GM10248 (cell line): ENCODE measurements at regions of chr17 and their contacts with region 1.

Region 1: DNA sequence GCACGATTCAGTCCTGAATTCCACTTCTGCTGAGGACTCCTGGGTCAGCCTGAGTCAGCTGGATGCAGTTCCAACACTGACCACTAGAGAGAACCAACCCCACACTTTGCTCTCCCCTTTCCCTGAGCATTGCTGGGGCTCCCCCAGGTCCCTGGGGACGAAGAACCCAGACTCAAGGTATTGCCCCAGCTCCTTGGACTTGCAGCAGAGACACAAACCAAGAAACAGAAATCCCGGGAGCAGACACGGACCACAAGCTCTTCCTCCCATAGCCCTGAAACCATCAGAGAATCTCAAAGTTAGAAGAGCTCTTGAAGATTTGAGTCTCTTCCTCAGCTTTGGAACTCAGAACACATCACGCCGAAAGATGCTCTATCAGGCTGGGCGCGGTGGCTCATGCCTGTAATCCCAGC is 678 bp upstream of the GH1 start:
- DNase-seq: peak; percentile 85
- CTCF ChIP-seq: peak; percentile 89

Region 2: DNA sequence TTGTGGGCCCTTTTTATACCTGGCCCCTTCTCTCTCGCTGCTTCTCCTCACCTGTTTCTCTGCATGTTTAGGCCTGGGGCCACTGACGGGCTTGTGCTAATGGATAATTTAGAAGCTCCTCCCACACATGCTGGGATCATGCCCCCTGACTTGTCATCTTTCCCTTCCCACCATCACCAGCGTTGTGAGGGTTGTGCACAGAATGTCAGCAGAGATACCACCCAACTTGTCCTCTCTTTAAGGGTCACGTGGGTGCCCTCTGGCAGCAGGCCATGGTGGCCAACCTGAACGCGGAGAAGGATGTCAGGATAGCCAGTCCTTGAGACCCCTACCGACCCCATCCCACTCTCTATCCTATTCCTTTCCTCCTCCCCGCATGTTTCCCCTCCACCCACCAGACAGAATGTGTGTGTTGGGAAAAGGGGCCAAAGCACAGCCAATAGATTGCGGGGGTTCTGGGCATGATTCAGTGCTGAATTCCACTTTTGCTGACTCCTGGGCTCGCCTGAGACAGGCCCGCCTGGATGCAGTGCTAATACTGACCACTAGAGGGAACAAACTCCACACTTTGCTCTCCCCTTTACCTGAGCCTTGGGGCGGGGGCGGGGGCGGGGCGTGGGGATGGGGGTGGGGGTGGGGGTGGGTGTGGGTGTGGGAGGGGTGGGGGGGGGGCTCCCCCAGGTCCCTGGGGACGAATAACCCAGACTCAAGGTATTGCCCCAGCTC is 37.3 kb before region 1 on chr17 and contains the start of gene GH2:
- CTCF ChIA-PET with region 1: interaction called, 13 read pairs
- POLR2A ChIA-PET with region 1: no interaction called
- DNase-seq: peak; percentile 80
- CTCF ChIP-seq: peak; percentile 67

Region 3: DNA sequence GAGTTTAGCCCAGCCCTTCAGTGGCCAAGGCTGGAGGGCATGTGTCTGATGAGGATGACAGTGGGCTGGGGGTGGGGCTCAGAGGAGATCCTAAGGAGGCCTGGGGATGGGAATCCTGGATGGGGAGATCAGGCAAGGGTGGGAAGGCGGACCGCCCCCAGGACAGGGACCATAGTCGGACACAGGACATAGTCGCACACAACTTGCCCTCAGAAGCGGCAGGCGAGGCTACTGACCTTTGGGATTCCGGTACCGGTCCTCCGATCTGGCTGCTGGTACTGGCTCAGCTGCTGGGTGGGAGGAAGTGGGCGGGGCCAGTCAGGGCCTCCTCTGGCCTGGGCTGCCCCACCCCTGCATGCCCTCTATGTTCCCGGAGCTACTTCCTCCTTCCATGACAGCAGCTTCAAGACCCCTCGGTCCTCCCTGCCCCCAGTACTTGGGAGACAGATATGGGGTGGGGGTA is 11.8 kb after region 1 on chr17:
- CTCF ChIA-PET with region 1: interaction called, 95 read pairs
- POLR2A ChIA-PET with region 1: no interaction called
- DNase-seq: peak; percentile 84
- CTCF ChIP-seq: no peak

Region 4: DNA sequence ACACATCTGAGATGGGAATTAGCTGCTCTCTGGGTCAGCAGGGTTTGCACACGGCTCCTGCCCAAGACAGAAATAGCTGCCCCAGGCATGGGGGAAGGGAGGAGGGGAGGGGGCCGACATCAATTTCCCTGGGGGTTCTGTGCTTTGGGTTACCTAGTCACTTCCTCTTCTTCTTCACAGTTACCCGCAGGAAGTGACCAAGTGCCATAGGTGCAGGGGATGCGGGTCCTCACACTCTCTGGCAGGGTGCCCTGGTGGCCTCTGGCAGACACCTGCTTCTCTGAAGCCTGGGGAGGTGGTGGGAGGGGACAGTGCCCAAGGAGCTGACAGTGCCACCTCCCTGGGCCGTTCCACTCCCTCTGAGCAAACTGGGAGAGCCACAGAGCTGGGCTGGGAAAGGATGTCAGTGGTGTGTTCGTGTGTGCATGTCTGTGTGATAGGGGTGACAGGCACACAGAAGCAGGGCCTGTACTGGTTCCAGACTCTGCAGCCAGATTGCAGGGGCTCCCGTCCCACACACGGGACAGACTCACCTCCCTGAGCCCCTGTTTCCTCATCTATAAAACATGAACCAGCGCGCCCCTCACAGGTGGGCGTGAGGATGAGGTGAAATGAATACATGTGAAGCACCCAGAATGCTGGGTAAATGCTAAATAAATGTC is 35.2 kb after region 1 on chr17:
- CTCF ChIA-PET with region 1: interaction called, 74 read pairs
- POLR2A ChIA-PET with region 1: no interaction called
- DNase-seq: peak; percentile 49
- CTCF ChIP-seq: no peak

Region 5: DNA sequence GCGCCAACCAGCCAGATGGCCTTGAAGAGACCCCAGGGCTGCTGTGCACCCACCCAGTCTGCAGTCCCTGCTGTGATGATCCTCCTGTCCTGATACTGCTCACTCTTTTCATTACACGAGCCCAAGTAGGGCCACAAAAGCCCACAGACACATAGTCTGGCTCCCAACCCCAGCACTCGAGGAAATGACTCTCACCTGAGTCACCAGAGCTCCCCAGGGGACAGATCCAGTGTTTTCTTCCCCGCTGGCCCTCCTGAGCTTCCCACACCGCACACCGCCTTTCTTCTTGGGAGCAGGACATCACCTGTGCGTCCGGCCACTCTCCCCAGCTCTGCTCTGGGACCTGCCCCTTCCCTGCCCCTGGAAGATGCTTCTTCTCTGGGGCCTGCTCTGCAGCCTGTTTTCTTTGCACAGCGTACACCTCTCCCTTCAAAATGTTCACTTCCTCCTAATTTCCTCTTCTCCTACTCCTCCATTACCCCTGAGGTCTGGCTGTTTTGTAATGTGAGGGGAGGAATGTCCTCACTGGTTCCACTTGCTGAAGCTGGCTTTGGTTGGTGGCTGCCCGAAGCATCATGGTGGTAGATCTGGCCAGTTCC is 55.4 kb after region 1 on chr17:
- CTCF ChIA-PET with region 1: interaction called, 15 read pairs
- POLR2A ChIA-PET with region 1: no interaction called
- DNase-seq: no peak
- CTCF ChIP-seq: no peak